Gastrocnemius medialis (tissue), 4 donors: ENCODE measurements at regions of chr17 and their contacts with region 1.

Region 1: DNA sequence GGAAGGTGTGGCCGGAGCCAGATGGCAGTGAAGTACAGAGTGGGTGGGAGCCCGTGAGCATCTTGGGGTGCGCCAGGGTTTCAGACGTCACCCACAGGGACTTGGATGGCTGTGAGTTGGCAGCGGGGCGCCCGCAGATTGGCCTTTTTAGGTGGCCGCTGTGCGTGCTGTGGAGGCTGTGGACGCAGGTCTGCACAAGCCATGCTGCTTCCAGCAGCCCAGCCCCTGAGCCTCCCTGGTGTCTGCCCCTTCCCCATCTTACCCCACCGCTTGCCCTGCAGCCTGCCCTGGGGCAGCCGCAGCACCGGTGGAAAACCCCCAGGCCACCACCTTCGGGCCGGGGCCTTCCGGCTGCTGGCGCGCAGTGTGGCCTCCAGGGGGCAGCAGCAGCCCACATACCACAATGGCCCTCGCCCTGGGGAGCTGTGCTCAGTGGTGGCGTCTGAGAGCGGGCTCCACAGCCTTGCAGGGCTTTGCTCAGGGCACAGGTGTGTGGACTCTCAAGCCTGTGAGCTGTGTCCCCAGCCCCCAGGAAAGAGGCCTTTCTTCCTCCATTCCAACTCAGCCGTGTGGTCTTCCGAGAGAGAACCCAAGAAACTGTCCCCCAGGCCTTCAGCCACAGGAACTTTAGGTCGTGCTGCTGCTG is 11.8 kb downstream of the ENDOV start:
- DNase-seq: peak; percentile 24 to 62
- ATAC-seq: peak; percentile 45 to 62
- H3K4me3 ChIP-seq: no peak overlapping the region
- H3K27ac ChIP-seq: no peak overlapping the region
- H3K4me1 ChIP-seq: peaks cover 0 to 15% of the 10 kb centered on the region in 2 donors
- H3K27me3 ChIP-seq: no peaks in the 10 kb centered on the region
- CTCF ChIP-seq: peak; percentile 96 to 99 (median 98)
- POLR2A ChIP-seq: no peak

Region 2: GRCh38 chr17:80359422-80360110 is 67.2 kb before region 1 on chr17:
- in situ Hi-C with region 1: no loop called
- intact Hi-C with region 1: no loop called
- DNase-seq: no peak
- ATAC-seq: no peak
- H3K4me3 ChIP-seq: no peak overlapping the region
- H3K27ac ChIP-seq: no peak overlapping the region
- H3K4me1 ChIP-seq: no peaks in the 10 kb centered on the region
- H3K27me3 ChIP-seq: no peaks in the 10 kb centered on the region
- CTCF ChIP-seq: no peak
- POLR2A ChIP-seq: no peak

Region 3: GRCh38 chr17:80477647-80478478 is 51.1 kb after region 1 on chr17:
- in situ Hi-C with region 1: no loop called
- intact Hi-C with region 1: loop called (anchors 5 kb)
- DNase-seq: peak in 1 of 2 donors; percentile 48
- ATAC-seq: peak; percentile 64 to 70
- H3K4me3 ChIP-seq: peak overlapping the region; percentile 40 to 61 (median 44)
- H3K27ac ChIP-seq: no peak overlapping the region
- H3K4me1 ChIP-seq: peaks cover 24 to 32% of the 10 kb centered on the region in 2 donors
- H3K27me3 ChIP-seq: peaks cover 78 to 94% (median 85%) of the 10 kb centered on the region in 3 donors
- CTCF ChIP-seq: peak; percentile 45 to 70 (median 61)
- POLR2A ChIP-seq: no peak

Region 4: GRCh38 chr17:80892019-80892855 is 465.4 kb after region 1 on chr17:
- in situ Hi-C with region 1: no loop called
- intact Hi-C with region 1: loop called (anchors 10 kb)
- DNase-seq: peak; percentile 78 to 88
- ATAC-seq: peak; percentile 81 to 89
- H3K4me3 ChIP-seq: no peak overlapping the region
- H3K27ac ChIP-seq: peak overlapping the region; percentile 63 to 85 (median 82)
- H3K4me1 ChIP-seq: peaks cover 7 to 15% of the 10 kb centered on the region in 2 donors
- H3K27me3 ChIP-seq: no peaks in the 10 kb centered on the region
- CTCF ChIP-seq: no peak
- POLR2A ChIP-seq: no peak

Region 5: GRCh38 chr17:80981062-80981902 is 554.5 kb after region 1 on chr17:
- in situ Hi-C with region 1: loop called in 3 of 4 experiments (anchors 5 to 10 kb)
- intact Hi-C with region 1: loop called (anchors 1 kb)
- DNase-seq: no peak
- ATAC-seq: peak in 1 of 2 donors; percentile 32
- H3K4me3 ChIP-seq: peak overlapping the region in 1 of 4 donors; percentile 21
- H3K27ac ChIP-seq: no peak overlapping the region
- H3K4me1 ChIP-seq: peaks cover 0 to 6% of the 10 kb centered on the region in 2 donors
- H3K27me3 ChIP-seq: peaks cover 0 to 6% (median 4%) of the 10 kb centered on the region in 3 donors
- CTCF ChIP-seq: peak; percentile 66 to 97 (median 85)
- POLR2A ChIP-seq: no peak